GM12878 (cell line): ENCODE measurements at regions of chr16 and their contacts with region 1.

Region 1: DNA sequence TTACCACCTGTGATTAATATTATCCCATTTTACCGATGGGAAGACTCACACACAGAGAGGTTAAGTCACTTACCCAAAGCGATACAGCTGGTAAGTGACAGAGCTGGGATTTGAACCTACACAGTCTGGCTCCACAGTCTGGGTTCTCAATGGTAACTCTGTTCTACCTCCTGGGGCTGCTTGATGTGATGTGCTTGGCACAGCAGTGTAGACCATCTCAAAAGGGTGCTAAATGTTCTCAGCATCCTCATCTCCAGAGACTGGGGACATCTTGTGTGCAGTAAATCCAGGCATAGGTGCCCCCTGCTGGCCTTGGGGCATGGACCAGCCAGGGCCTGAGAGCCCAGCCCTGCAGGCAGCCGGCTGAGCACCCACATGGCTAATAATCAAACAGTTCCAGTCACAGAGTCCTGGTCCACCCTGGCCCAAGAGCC is 15.4 kb upstream of the KATNB1 start:
- DNase-seq: no peak
- ATAC-seq: peak; percentile 96
- H3K4me3 ChIP-seq: no peak overlapping the region
- H3K27ac ChIP-seq: no peak overlapping the region
- H3K4me1 ChIP-seq: no peaks in the 10 kb centered on the region
- H3K27me3 ChIP-seq: peaks cover 0 to 2% of the 10 kb centered on the region in 2 experiments; a peak in 2 of 4 replicates
- CTCF ChIP-seq: peak; percentile 49 to 68 (median 60)
- EP300 ChIP-seq: no peak
- POLR2A ChIP-seq: no peak
- RAD21 ChIP-seq: peak; percentile 60

Region 2: GRCh38 chr16:57648590-57649442 is 71.3 kb before region 1 on chr16:
- CTCF ChIA-PET with region 1: interaction called, 3 read pairs
- POLR2A ChIA-PET with region 1: no interaction called
- RAD21 ChIA-PET with region 1: no interaction called
- SMC1A ChIA-PET with region 1: interaction called, 3 read pairs
- in situ Hi-C with region 1: no loop called
- intact Hi-C with region 1: loop called (anchors 2 kb)
- DNase-seq: peak; percentile 52
- ATAC-seq: peak; percentile 83
- H3K4me3 ChIP-seq: no peak overlapping the region
- H3K27ac ChIP-seq: peak overlapping the region; percentile 13; the same call in 1 of the 2 replicates
- H3K4me1 ChIP-seq: peaks cover 19% of the 10 kb centered on the region
- H3K27me3 ChIP-seq: no peaks in the 10 kb centered on the region
- CTCF ChIP-seq: peak; percentile 100; a peak in 5 of 6 replicates
- EP300 ChIP-seq: no peak
- POLR2A ChIP-seq: no peak
- RAD21 ChIP-seq: peak; percentile 99